BJ (cell line): ENCODE measurements at regions of chr15 and their contacts with region 1.

Region 1: DNA sequence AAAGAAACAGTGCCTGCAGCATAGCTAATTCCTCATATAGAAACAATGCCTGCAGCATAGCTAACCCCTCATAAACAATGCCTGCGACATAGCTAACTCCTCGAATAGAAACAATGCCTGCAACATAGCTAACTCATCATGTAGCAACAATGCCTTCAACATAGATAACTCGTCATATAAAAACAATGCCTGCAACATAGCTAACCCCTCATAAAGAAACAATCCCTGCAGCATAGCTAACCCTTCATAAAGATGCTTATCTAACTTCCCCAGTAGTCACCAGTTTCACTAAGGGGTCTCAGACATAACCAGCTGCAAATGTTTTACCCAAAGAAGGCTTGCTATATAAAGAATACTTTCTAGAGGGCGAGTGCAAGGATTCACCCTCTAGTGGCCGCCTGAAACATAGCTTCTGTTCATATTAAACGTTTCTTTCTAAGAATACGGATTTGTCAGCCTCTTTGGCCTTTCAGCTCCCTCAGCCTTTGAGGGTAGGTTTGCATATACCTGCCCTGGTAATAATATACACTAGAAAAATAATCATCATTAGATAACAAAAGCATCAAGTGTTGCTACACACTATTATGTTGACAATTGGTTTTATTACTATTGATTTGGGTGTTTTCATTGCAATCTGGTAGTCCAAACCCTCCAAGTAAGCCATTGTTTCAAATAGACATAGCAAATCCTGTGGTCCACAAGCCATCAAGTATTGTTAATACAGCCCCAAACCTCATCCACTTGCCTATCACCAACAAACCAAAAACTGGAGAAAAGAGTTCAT is 44.4 kb upstream of the FAN1 start:
- DNase-seq: peak; percentile 9
- H3K4me3 ChIP-seq: no peak overlapping the region
- H3K27me3 ChIP-seq: no peaks in the 10 kb centered on the region
- CTCF ChIP-seq: peak; percentile 80

Region 2: GRCh38 chr15:30872341-30872748 is 13.1 kb after region 1 on chr15:
- CTCF ChIA-PET with region 1: interaction called, 12 read pairs
- POLR2A ChIA-PET with region 1: no interaction called
- DNase-seq: no peak
- H3K4me3 ChIP-seq: no peak overlapping the region
- H3K27me3 ChIP-seq: no peaks in the 10 kb centered on the region
- CTCF ChIP-seq: no peak

Region 3: DNA sequence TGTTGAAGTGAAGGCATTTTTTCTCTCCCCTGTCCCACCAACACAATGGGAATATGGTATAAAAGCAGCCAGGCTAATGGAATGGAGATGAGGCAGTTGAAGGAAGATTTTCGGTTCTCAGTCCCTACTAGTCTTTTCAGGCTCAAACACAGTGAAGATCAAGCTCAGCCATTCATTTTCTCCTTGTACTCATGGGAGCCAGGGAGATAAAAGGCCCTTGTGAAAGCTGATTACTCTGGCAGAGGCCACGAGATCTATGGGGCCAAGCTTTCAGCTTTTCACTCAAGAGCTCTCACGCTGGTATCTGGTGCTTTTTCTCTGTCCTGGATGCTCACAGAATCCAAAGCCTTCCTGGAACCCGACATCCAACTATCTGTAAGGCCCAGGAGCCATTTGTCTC is 29.9 kb after region 1 on chr15:
- CTCF ChIA-PET with region 1: interaction called, 10 read pairs
- POLR2A ChIA-PET with region 1: no interaction called
- DNase-seq: no peak
- H3K4me3 ChIP-seq: no peak overlapping the region
- H3K27me3 ChIP-seq: peaks cover 1% of the 10 kb centered on the region; the same call in 1 of the 2 replicates
- CTCF ChIP-seq: no peak

Region 4: GRCh38 chr15:30979457-30979856 is 120.2 kb after region 1 on chr15:
- CTCF ChIA-PET with region 1: no interaction called
- POLR2A ChIA-PET with region 1: no interaction called
- DNase-seq: no peak
- H3K4me3 ChIP-seq: no peak overlapping the region
- H3K27me3 ChIP-seq: no peaks in the 10 kb centered on the region
- CTCF ChIP-seq: no peak